ENCODE measurements at regions of chr6 and their contacts with region 1.

Region 1: GRCh38 chr6:138588805-138589434 is 89.6 kb upstream of the NHSL1 start:
- ATAC-seq: peak; percentile 9 to 52 (median 47)
- H3K4me3 ChIP-seq: no peak overlapping the region
- H3K27ac ChIP-seq: no peak overlapping the region
- H3K4me1 ChIP-seq: peaks cover 11 to 15% of the 10 kb centered on the region in 2 donors

Region 2: GRCh38 chr6:138240476-138241245 is 348.3 kb before region 1 on chr6:
- in situ Hi-C with region 1: no loop called
- ATAC-seq: no peak
- H3K4me3 ChIP-seq: no peak overlapping the region
- H3K27ac ChIP-seq: no peak overlapping the region
- H3K4me1 ChIP-seq: peaks cover 0 to 7% of the 10 kb centered on the region in 2 donors

Region 3: DNA sequence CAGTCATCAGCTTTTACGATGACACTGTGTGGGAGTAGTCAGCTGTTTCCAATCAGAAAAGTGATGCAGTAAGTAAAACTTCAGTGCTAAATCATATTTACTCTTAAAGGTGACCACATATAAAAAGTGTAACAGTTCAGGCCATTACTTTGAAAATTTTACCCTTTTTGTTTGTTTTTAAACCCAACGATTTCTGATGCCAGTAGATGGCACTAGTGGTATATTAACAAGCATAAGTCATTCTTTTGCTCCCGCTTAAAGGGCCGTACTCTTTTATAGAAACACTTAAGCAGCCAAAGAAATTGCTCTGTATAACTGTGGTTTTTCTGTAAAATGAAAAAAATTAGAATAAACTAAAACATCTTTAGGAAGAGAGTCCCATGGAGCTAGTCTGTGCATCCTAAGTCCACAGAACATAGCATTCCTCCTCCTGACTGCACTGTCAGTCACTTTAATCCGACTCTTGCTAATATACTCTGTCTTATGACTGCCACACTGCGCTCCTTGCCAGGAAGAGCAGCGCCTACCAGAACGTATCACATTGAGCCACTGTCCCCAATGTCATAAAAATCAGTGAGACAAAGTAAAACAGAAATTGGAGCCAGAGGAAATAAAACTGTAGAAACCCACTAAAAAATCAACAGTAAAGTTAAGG is 159.8 kb before region 1 on chr6:
- in situ Hi-C with region 1: loop called in 6 of 9 experiments (anchors 10 to 25 kb)
- ATAC-seq: peak; percentile 38 to 73 (median 46)
- H3K4me3 ChIP-seq: no peak overlapping the region
- H3K27ac ChIP-seq: no peak overlapping the region
- H3K4me1 ChIP-seq: no peaks in the 10 kb centered on the region

Region 4: DNA sequence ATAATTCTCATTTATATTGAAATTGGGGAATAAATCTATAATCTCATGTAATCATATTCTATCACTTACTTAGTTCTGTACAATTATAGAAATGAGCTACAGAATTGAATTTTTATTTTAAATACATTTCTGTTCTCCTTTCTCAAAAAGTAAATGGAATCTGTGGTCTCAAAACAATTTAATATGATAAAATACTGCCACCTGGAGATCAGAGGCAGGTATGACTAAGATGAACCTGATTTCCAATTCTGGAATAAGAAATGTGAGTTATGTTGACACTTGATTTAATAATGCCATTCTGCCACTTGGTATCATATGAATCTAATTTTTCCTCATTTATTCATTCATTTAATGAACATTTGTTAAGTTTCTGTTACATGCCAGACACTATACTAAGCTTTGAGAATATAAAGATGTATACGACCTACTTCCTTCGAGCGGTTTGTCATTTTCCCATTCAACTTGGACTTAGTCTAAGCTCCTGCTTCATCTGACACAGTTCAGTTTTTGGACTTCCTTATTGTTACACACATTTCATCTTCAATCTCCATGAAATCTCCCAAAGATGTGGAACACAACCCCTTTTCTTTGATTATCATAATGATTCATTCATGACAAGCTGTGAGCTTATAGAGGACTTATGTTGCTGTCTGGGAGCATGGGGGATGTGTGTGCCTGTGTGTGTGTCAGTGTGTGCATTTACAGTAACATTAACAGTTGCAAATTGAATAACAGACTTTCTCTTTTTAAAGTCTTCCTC is 177.2 kb after region 1 on chr6:
- in situ Hi-C with region 1: loop called in 6 of 9 experiments (anchors 10 to 25 kb)
- ATAC-seq: no peak
- H3K4me3 ChIP-seq: no peak overlapping the region
- H3K27ac ChIP-seq: no peak overlapping the region
- H3K4me1 ChIP-seq: no peaks in the 10 kb centered on the region

Measured in motor neuron (in vitro differentiated cells).